Thyroid gland (tissue), 4 donors: ENCODE measurements at regions of chr9 and their contacts with region 1.

Region 1: DNA sequence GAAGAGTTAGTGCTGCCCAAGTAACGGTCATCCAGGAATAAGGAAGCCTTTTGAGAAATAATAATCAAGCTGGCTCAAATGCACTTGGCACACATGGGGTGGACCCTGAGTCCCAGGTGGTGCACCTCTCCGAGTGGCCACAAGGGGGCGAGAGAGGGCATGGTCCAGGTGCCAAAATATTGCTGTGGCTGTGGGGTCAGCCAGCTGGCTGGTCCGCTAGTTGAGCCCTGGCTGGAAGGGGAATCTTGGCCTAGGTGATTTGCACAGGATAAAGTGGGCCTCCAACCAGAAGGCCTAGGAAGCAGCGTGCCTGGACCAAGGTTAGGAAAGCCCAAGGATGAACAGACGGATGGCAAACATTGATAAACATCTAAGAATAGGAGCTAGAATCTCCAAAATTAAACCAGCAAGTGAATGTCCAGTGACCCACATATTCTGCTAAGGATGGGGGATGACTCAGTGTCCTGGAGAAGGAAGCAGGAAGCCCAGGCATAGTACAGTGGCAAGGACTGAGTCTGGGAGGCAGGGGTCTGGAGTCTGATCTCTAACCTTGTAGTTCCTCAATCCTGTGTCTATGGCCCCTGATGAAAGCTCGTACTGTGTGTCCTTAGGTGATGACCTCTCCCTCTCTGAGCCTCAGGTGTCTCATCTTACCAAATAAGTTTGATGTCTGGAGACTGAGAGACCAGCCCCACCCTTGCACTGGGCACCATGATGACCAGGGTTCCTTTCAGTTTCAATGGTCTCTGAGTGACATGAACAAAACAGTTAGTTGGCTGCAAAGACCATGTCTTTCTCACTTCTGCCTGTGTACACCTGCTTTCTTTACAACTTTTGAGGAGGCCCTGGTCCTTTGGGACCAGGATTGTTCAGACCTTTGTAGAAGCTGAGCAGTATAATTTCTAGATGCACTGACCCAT is 19.2 kb upstream of the SHB start:
- DNase-seq: peak; percentile 73 to 79
- H3K4me3 ChIP-seq: no peak overlapping the region
- H3K27ac ChIP-seq: no peak overlapping the region
- H3K4me1 ChIP-seq: no peaks in the 10 kb centered on the region
- H3K27me3 ChIP-seq: no peaks in the 10 kb centered on the region
- CTCF ChIP-seq: peak; percentile 87 to 97 (median 92)
- POLR2A ChIP-seq: no peak

Region 2: DNA sequence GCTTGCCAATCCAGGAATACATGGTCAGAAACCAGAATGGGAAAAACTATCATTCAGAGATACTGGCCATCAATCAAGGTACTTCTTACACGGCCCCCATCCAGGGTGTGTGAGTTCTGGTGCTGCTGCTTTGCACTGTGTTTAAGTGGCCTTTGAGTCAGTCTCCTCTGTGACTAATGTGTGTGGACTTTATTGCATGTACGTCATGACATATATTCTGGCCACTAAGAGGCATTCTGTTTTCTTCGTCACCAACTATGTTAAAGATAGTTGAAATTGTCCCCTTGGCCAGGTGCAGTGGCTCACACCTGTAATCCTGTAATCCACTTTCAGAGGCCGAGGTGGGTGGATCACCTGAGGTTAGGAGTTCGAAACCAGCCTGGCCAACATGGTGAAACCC is 311.9 kb before region 1 on chr9:
- intact Hi-C with region 1: no loop called
- DNase-seq: no peak
- H3K4me3 ChIP-seq: no peak overlapping the region
- H3K27ac ChIP-seq: no peak overlapping the region
- H3K4me1 ChIP-seq: no peaks in the 10 kb centered on the region
- H3K27me3 ChIP-seq: no peaks in the 10 kb centered on the region
- CTCF ChIP-seq: no peak
- POLR2A ChIP-seq: no peak

Region 3: DNA sequence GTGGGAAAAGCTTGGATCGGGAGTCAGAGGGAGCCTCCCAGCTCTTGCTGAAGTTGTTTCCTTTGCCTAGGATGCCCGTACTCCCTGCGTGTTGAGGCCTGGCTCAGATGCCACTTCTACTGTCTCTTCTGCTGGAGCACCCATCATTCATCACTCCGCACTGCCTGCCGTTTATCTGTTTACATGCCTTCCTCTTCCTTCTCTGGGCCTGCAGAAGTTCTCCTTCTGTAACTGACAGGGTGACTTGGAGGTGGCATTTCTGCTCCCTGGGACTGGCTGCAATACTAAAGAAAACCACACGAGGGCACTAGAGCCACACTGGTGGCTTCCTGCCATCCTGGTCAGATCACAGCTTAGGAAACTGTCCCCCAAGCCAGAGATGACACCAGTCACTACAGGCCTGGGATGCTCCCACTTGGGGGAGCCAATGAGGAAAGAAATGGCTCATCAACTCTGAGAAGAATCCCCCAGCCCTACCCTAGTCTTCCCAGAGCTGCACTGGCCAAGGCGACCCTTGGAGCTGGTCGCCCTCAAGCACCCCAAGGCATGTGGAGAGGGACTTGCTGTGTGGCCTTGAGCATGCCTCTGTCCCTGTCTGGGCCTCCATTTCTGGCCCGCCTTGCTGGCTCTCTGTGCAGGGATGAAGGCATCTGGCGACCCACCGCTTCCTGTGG is 174.6 kb before region 1 on chr9:
- intact Hi-C with region 1: loop called (anchors 5 kb)
- DNase-seq: peak; percentile 70 to 72
- H3K4me3 ChIP-seq: no peak overlapping the region
- H3K27ac ChIP-seq: no peak overlapping the region
- H3K4me1 ChIP-seq: peaks cover 16 to 17% of the 10 kb centered on the region in 2 donors
- H3K27me3 ChIP-seq: no peaks in the 10 kb centered on the region
- CTCF ChIP-seq: peak; percentile 93 to 99 (median 97)
- POLR2A ChIP-seq: no peak

Region 4: DNA sequence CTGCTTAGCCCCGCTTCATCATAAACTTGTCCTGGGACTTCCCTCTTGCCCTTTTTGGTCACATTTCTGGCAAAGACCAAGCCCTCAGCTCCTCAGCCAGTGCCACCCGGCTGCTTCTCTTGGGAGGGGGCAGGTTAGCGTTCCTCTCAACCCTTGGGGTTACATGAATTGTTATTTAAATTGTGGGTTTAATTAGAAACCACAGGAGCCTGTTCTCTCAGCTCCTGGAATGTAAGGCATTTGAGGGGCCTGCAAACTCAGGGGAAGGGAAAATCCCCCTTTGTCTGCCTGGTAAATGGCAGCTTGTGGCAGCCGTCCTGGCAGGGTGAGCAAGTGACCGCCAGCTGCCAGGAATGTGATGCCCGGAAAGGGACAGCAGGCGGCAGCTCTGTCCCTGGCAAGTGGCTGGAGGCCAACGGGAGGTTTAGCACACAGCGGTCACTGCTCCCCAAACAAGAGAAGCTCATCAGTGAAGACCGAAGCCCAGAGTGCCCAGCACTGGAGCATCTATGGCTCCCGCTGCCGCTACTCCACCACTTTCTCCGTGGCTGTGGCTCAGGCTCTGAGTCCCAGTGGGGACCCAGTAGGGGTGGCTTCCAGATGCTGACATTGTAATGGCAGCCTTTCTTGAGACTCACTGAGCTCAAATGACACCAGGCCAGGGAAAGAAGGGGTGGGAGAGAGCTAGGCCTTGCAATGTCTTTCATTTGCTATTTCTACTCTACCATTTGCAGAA is 70.9 kb before region 1 on chr9:
- intact Hi-C with region 1: loop called (anchors 5 kb)
- DNase-seq: peak; percentile 82 to 90
- H3K4me3 ChIP-seq: no peak overlapping the region
- H3K27ac ChIP-seq: peak overlapping the region; percentile 37 to 57 (median 57)
- H3K4me1 ChIP-seq: peaks cover 44 to 55% of the 10 kb centered on the region in 2 donors
- H3K27me3 ChIP-seq: no peaks in the 10 kb centered on the region
- CTCF ChIP-seq: peak in 5 of 6 experiments; percentile 45 to 87 (median 72)
- POLR2A ChIP-seq: no peak

Region 5: DNA sequence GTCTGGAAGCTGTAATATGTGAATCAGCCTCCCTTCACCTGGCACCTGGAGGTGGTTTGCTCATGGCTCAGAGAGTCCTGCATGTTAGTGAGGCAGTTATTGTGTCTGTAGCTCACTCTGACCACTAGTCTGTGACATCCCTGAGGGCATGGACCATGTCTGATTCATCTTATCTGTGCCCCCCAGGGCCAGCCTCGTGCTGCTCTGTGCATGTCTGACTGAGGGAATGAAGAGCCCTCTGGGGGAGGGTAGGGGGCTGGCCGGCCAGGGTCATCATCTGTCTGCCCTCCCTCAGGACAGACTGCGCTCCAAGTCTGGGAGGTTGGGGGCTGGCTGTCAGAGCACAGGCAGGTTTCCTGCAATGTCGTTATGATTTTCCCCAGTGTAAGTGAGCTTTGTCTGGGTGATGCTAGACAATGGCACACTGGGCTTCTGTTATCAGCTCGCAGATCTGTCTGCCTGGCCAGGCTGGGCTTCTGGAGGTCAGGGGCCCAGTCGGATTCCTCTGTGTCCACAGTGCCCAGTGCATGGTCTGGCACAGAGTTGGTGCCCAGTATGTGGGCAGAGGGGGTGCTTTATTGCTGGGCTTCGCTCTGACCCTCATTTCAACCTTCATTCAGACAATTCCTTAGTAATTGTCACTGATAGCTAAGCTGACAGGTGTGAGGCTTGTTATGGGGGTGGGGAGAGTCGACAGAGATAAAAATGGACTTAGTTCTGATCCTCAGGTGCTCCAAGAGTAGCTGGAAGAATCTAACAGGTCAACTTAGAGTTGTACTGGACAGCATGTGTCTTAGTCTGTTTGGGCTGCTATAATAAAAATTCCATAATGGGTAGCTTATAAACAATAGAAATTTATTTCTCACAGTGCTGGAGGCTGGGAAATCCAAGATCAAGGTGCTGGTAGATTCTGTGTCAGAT is 66.5 kb after region 1 on chr9:
- intact Hi-C with region 1: no loop called
- DNase-seq: no peak
- H3K4me3 ChIP-seq: no peak overlapping the region
- H3K27ac ChIP-seq: no peak overlapping the region
- H3K4me1 ChIP-seq: no peaks in the 10 kb centered on the region
- H3K27me3 ChIP-seq: no peaks in the 10 kb centered on the region
- CTCF ChIP-seq: no peak
- POLR2A ChIP-seq: no peak

Region 6: DNA sequence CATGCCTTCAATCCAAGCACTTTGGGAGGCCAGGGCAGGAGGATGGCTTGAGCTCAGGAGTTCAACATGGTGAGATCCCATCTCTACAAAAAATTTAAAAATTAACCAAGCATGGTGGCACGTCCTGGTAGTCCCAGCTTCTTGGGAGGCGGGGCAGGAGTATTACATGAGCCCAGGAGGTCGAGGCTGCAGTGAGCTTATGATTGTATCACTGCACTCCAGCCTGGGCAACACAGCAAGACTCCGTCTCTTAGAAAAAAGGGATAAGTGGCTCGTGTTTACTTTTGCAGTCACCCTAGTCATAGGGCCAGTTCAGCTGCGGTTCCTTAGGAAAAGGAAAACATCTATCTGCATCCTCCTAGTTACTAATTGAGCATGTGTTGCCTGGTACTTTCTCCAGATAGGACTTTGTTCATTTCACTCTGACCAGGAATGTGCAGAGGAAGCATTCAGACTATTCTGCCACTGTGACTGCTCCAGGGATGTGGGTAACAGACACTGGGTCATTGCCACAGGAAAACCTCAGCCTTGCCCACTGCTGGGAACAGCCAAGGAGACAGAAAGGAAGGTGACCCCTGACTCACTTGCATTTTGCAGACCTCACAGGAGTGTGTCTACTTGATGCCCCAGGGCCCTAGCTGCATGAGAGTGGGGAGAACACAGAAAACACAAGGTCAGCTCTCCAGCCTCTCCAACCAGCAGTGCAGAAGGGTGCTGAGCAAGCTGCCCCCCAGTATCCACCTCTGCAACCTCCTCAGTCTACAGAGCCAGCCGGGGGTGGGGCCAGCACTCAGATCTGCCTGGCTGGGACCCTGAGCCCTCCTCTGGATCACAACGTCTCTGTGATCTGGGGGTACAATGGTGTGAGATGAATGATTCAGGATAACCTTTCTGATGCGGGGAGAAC is 270.4 kb after region 1 on chr9:
- intact Hi-C with region 1: loop called (anchors 10 kb)
- DNase-seq: no peak
- H3K4me3 ChIP-seq: no peak overlapping the region
- H3K27ac ChIP-seq: no peak overlapping the region
- H3K4me1 ChIP-seq: peaks cover 4% of the 10 kb centered on the region in 2 donors
- H3K27me3 ChIP-seq: no peaks in the 10 kb centered on the region
- CTCF ChIP-seq: no peak
- POLR2A ChIP-seq: no peak